Common myeloid progenitor, CD34-positive (primary cell): ENCODE measurements at regions of chr3 and their contacts with region 1.

Region 1: DNA sequence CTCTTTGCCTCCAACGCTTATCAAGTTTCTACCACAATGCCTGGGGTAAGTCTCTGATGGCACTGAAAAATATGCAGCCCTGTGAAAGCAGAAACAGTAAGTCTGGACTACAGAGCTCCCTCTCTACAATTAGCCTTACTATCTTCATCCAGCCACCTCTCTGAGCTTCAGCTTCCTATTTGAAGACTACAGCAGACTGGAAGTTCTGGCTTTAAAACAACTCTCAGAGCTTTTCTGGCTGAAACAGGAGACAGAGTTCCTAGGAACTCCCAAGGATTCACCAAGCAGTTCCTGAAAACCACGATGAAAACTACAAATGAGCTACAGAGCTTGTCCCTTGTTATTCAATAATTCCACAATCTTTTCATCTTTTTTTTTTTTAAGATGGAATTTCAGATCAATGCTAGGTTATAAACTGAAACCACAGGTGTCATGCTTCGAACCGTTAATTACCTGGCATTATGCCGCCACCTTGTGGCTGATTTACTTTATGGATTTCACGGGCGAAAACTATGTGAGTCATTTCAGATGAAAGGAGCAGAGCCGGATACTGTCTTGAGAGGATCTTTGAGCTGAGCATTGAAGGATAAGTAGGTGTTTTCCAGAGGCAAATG is 3.9 kb downstream of the CRYGS start:
- DNase-seq: peak; percentile 81 to 93 (median 87)
- H3K4me3 ChIP-seq: peak overlapping the region in 2 of 7 experiments; percentile 34 to 54
- H3K27ac ChIP-seq: no peak overlapping the region
- H3K4me1 ChIP-seq: peaks cover 2 to 29% (median 14%) of the 10 kb centered on the region in 4 experiments
- H3K27me3 ChIP-seq: no peaks in the 10 kb centered on the region

Region 2: GRCh38 chr3:185976977-185977678 is 563.2 kb before region 1 on chr3:
- CTCF ChIA-PET with region 1: interaction called, 122 read pairs
- POLR2A ChIA-PET with region 1: no interaction called
- DNase-seq: peak; percentile 78 to 89 (median 83)
- H3K4me3 ChIP-seq: no peak overlapping the region
- H3K27ac ChIP-seq: no peak overlapping the region
- H3K4me1 ChIP-seq: peaks cover 0 to 10% (median 4%) of the 10 kb centered on the region in 4 experiments
- H3K27me3 ChIP-seq: no peaks in the 10 kb centered on the region

Region 3: GRCh38 chr3:186241910-186242821 is 298.2 kb before region 1 on chr3:
- CTCF ChIA-PET with region 1: interaction called, 37 read pairs
- POLR2A ChIA-PET with region 1: no interaction called
- DNase-seq: peak; percentile 92 to 97 (median 96)
- H3K4me3 ChIP-seq: peak overlapping the region in 5 of 7 experiments; percentile 27 to 76 (median 56)
- H3K27ac ChIP-seq: no peak overlapping the region
- H3K4me1 ChIP-seq: peaks cover 0 to 21% (median 15%) of the 10 kb centered on the region in 4 experiments
- H3K27me3 ChIP-seq: no peaks in the 10 kb centered on the region

Region 4: GRCh38 chr3:186264608-186265400 is 275.5 kb before region 1 on chr3:
- CTCF ChIA-PET with region 1: interaction called, 232 read pairs
- POLR2A ChIA-PET with region 1: no interaction called
- DNase-seq: no peak
- H3K4me3 ChIP-seq: no peak overlapping the region
- H3K27ac ChIP-seq: no peak overlapping the region
- H3K4me1 ChIP-seq: peaks cover 0 to under 1% (median 0%) of the 10 kb centered on the region in 4 experiments
- H3K27me3 ChIP-seq: no peaks in the 10 kb centered on the region

Region 5: GRCh38 chr3:186406669-186407635 is 133.4 kb before region 1 on chr3:
- CTCF ChIA-PET with region 1: no interaction called
- POLR2A ChIA-PET with region 1: no interaction called
- DNase-seq: no peak
- H3K4me3 ChIP-seq: no peak overlapping the region
- H3K27ac ChIP-seq: no peak overlapping the region
- H3K4me1 ChIP-seq: no peaks in the 10 kb centered on the region
- H3K27me3 ChIP-seq: peaks cover 0 to 6% (median 0%) of the 10 kb centered on the region in 5 experiments

Region 6: DNA sequence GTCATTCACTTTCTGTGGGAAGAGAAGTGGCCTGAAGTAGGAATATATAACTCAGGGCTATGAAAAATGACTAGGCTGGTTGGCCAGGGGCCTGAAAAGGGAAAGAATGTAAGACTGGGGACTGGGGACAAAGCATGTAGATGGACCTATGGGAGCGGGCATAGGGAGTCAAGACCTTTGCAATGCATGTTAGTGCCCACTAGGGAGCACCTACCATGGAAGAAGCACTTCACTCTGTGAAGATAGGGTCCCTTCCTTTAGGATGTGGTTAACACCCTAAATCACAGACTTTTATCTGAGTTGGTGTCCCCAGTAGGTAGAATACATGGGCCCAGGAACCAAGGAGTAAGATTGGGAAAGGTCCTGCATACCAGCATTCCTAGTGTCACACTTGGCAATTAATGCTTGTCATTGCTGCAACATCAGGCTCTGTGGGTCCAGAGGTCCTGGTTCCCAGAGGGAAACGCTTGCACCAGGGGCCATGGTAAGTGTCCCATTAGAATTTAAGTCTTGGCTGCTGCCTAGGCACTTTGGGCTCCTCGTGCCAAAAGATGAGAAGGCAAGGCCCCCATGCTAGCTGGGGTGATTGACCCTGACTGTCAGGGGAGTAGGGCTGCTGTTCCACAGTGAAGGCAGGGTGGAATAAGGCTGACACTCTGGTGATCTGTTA is 75.8 kb before region 1 on chr3:
- CTCF ChIA-PET with region 1: interaction called, 22 read pairs
- POLR2A ChIA-PET with region 1: no interaction called
- DNase-seq: peak; percentile 3 to 21 (median 20)
- H3K4me3 ChIP-seq: no peak overlapping the region
- H3K27ac ChIP-seq: no peak overlapping the region
- H3K4me1 ChIP-seq: no peaks in the 10 kb centered on the region
- H3K27me3 ChIP-seq: no peaks in the 10 kb centered on the region

Region 7: DNA sequence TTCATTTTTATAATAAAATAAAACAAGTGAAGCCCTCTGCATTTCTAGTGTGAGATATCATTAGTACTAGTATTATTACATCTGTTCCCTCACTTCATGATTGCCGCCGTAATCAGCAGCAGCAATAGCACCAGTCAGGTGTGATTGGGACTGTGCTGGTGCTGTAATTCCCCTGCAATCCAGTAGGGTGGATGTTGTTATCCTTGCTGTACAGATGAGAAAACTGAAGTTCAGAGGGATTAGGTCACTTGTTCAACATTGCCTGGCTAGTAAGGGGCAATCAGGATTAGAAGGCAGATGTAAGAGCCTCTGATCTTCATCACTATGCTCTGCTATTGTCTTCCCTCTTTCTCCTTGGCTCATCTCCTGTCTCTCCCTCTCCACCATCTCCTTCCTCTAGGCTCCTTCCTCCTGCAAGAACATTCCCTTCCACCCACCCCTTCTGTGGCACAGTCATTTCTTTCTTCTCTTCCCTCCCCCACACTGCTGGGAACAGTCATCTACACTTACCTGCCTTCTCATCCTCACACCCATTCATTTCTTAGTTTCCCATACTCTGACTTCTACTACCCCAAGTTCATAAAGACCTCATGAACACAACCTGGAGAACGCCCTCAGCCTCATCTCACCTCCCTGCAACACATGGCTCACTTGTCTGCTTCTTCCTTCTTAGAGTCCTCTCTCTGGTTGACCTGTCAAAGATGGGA is 25.9 kb before region 1 on chr3:
- CTCF ChIA-PET with region 1: interaction called, 46 read pairs
- POLR2A ChIA-PET with region 1: interaction called, 5 read pairs
- DNase-seq: peak in 2 of 3 donors; percentile 39 to 53
- H3K4me3 ChIP-seq: peak overlapping the region in 1 of 7 experiments; percentile 0
- H3K27ac ChIP-seq: peak overlapping the region; percentile 46 to 75
- H3K4me1 ChIP-seq: peaks cover 14 to 87% (median 45%) of the 10 kb centered on the region in 4 experiments
- H3K27me3 ChIP-seq: no peaks in the 10 kb centered on the region

Region 8: GRCh38 chr3:187336322-187336721 is 796.0 kb after region 1 on chr3:
- CTCF ChIA-PET with region 1: no interaction called
- POLR2A ChIA-PET with region 1: no interaction called
- DNase-seq: no peak
- H3K4me3 ChIP-seq: no peak overlapping the region
- H3K27ac ChIP-seq: no peak overlapping the region
- H3K4me1 ChIP-seq: no peaks in the 10 kb centered on the region
- H3K27me3 ChIP-seq: peaks cover 0 to 2% (median 2%) of the 10 kb centered on the region in 5 experiments